ENCODE measurements at regions of chr5 and their contacts with region 1.

Region 1: DNA sequence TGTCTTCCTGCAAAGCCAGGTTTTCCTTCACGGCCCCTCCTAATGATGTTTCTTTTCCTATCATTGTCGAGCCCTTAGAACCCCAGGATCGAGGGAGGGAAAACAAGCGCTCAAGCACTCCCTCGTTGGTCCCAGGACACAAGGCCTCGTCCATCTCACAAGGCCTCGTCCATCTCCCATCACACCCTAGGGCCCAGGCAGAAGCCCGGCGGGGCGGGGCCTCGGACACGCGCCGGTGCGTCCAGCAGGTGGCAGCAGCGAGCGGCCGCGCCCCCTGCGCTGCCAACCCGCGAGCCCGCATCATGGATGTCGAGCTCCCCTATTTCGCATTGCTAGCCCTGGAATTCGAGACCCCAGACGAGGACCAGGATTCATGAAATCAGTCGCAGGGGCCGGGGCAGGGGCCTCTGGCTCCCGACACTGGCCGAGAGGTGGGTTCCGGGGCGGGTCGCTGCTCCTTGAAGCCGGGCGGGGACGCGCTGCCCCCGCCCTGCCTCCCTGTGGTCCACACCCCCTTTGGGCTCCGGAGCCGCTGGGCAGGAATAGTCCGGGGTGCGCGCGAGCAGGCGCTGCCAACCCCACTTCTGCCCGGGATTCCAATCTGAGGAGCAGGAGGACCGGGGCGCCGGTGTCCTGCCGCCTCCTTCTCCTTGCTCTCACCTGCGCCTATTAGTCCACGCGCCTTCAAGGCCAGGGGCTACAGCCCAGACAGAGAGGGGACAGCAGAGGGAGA is at the start of gene ABLIM3:
- DNase-seq: peak; percentile 74
- H3K4me3 ChIP-seq: peak within 1 kb of the TSS; percentile 73 to 84 (median 82)
- H3K27ac ChIP-seq: peak within 1 kb of the TSS; percentile 43
- H3K4me1 ChIP-seq: peaks cover 12% of the 10 kb centered on the region
- H3K27me3 ChIP-seq: no peaks in the 10 kb centered on the region
- CTCF ChIP-seq: peak; percentile 75 to 85
- total RNA-seq, gene ABLIM3: 17.3 to 38.6 TPM

Region 2: DNA sequence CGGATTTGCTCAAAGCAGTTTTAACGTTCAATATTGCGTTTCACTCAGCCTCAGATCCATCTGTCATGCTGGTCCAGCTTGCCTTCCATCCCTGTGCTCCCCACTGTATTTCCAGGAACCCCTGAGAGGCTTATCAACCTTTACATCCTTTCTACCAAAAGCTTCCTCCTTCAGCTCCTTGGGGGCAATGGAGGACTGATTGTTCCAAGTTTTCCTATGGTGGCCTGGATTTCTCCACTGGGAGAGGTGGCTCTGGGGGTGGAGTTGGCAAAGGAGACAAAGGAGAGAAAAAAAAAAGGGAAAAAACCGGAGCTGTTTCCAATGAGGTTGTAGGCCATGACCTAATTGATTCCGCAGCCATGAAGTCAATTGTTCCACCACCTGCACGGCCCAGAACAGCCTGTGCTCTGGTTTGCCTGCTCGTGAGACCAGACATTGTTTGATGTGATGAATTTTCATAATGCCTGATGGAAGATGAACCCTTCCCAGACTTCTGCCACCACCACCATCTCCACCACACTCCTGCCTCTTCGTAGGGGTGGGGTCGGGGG is 54.0 kb after region 1 on chr5:
- CTCF ChIA-PET with region 1: interaction called, 4 read pairs
- dilution Hi-C with region 1: no loop called
- in situ Hi-C with region 1: no loop called
- intact Hi-C with region 1: loop called (anchors 2 kb)
- DNase-seq: no peak
- H3K4me3 ChIP-seq: no peak overlapping the region
- H3K27ac ChIP-seq: no peak overlapping the region
- H3K4me1 ChIP-seq: no peaks in the 10 kb centered on the region
- H3K27me3 ChIP-seq: no peaks in the 10 kb centered on the region
- CTCF ChIP-seq: no peak

Region 3: GRCh38 chr5:149228618-149229297 is 87.4 kb after region 1 on chr5:
- CTCF ChIA-PET with region 1: interaction called, 4 read pairs
- dilution Hi-C with region 1: no loop called
- in situ Hi-C with region 1: loop called (anchors 5 to 25 kb)
- intact Hi-C with region 1: loop called (anchors 1 kb)
- DNase-seq: peak; percentile 76
- H3K4me3 ChIP-seq: no peak overlapping the region
- H3K27ac ChIP-seq: no peak overlapping the region
- H3K4me1 ChIP-seq: peaks cover 21% of the 10 kb centered on the region
- H3K27me3 ChIP-seq: no peaks in the 10 kb centered on the region
- CTCF ChIP-seq: peak; percentile 73 to 85

Region 4: GRCh38 chr5:149254506-149254905 is 113.1 kb after region 1 on chr5:
- CTCF ChIA-PET with region 1: interaction called, 15 read pairs
- dilution Hi-C with region 1: no loop called
- in situ Hi-C with region 1: loop called in 1 of 2 experiments (anchors 25 kb)
- intact Hi-C with region 1: no loop called
- DNase-seq: no peak
- H3K4me3 ChIP-seq: no peak overlapping the region
- H3K27ac ChIP-seq: no peak overlapping the region
- H3K4me1 ChIP-seq: peaks cover 5% of the 10 kb centered on the region
- H3K27me3 ChIP-seq: no peaks in the 10 kb centered on the region
- CTCF ChIP-seq: no peak

Region 5: DNA sequence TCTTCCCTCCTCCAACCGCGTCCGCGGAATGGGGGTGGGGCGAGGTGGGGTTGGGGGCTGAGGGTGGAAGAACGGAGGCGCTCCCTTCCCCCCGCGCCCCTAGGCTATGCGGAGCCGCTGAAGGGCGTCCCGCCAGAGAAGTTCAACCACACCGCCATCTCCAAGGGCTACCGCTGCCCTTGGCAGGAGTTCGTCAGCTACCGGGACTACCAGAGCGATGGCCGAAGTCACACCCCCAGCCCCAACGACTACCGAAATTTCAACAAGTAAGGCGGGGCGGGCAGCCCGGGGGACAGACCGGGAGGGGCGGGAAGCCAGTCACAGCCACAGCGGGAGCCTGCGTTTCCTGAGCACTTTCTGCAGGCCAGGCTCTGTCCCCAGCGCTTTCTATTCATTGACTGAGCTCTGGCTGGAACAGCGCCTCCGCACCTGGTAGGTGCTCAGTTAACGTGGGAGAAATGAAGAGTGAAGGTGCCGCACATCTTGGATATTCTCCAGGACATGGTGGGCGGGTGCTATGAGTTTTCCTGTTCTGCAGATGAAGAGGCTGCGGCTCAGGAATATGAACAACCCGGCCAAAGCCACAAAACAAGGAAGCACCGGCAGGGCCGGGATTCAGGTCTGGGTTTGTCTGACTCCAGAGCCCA is 1531.0 kb after region 1 on chr5:
- CTCF ChIA-PET with region 1: no interaction called
- dilution Hi-C with region 1: no loop called
- in situ Hi-C with region 1: no loop called
- intact Hi-C with region 1: no loop called
- DNase-seq: peak; percentile 76
- H3K4me3 ChIP-seq: peak overlapping the region in 2 of 3 experiments; percentile 15 to 37
- H3K27ac ChIP-seq: no peak overlapping the region
- H3K4me1 ChIP-seq: peaks cover 5% of the 10 kb centered on the region
- H3K27me3 ChIP-seq: no peaks in the 10 kb centered on the region
- CTCF ChIP-seq: peak in 1 of 2 donors; percentile 12